Ascending aorta (tissue), 2 donors: ENCODE measurements at regions of chrX and their contacts with region 1.

Region 1: GRCh38 chrX:49163555-49164419 is 1.2 kb downstream of the MAGIX start:
- DNase-seq: peak; percentile 65 to 92
- H3K4me3 ChIP-seq: peak overlapping the region; percentile 30 to 64
- H3K27ac ChIP-seq: peak overlapping the region; percentile 88 to 91
- H3K4me1 ChIP-seq: peaks cover 0 to 4% of the 10 kb centered on the region in 2 donors
- H3K27me3 ChIP-seq: no peaks in the 10 kb centered on the region
- CTCF ChIP-seq: peak; percentile 28 to 96 (median 51)

Region 2: GRCh38 chrX:49120099-49120498 is 43.7 kb before region 1 on chrX:
- intact Hi-C with region 1: loop called (anchors 1 kb)
- DNase-seq: no peak
- H3K4me3 ChIP-seq: no peak overlapping the region
- H3K27ac ChIP-seq: no peak overlapping the region
- H3K4me1 ChIP-seq: peaks cover 0 to 5% of the 10 kb centered on the region in 2 donors
- H3K27me3 ChIP-seq: no peaks in the 10 kb centered on the region
- CTCF ChIP-seq: no peak

Region 3: GRCh38 chrX:49191033-49191871 is 27.5 kb after region 1 on chrX:
- intact Hi-C with region 1: loop called (anchors 2 kb)
- DNase-seq: peak; percentile 85 to 96
- H3K4me3 ChIP-seq: peak overlapping the region; percentile 57 to 78
- H3K27ac ChIP-seq: peak overlapping the region; percentile 81
- H3K4me1 ChIP-seq: no peaks in the 10 kb centered on the region
- H3K27me3 ChIP-seq: no peaks in the 10 kb centered on the region
- CTCF ChIP-seq: no peak